ENCODE measurements at regions of chr11 and their contacts with region 1.

Region 1: GRCh38 chr11:20042118-20042518 is 118.2 kb downstream of the DBX1 start:
- DNase-seq: no peak
- ATAC-seq: no peak
- H3K4me3 ChIP-seq: no peak overlapping the region
- H3K27ac ChIP-seq: peak overlapping the region in 7 of 12 donors; percentile 6 to 61 (median 17)
- H3K4me1 ChIP-seq: peaks cover 0 to 50% (median 15%) of the 10 kb centered on the region in 12 donors
- H3K27me3 ChIP-seq: no peaks in the 10 kb centered on the region
- CTCF ChIP-seq: no peak
- POLR2A ChIP-seq: no peak

Region 2: DNA sequence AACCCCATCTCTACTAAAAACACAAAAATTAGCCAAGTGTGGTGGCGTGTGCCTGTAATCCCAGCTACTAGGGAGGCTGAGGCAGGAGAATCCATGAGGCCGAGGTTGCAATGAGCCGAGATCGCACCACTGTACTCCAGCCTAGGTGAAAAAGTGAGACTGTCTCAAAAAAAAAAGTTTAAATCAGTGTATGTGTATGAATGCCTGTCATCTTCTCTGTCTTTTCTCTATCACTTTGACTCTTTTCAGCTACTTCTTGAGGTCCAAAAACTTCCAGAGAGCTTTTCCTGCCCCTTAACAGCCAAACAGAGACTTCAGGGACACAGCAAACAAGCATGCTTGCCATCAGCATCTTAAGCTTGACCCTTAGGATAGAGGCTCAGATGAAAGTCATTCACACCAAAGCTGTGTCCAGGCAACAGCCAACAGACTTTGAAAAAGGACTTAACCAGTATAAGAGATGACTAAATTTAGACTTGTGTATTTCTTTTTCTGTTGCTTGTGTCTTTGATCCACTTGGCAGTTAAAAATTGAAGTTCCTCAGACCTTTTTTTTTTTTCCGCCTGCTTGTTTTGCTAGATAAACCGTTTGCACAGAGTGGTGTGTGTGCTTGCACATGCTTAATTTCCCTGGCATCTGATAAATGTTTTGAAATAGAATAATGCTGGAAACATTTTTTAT is 33.8 kb before region 1 on chr11:
- intact Hi-C with region 1: loop called in 3 of 10 experiments (anchors 5 kb)
- DNase-seq: no peak
- ATAC-seq: peak in 1 of 4 donors; percentile 18
- H3K4me3 ChIP-seq: no peak overlapping the region
- H3K27ac ChIP-seq: peak overlapping the region in 9 of 12 donors; percentile 0 to 81 (median 73)
- H3K4me1 ChIP-seq: peaks cover 0 to 36% (median 17%) of the 10 kb centered on the region in 12 donors
- H3K27me3 ChIP-seq: no peaks in the 10 kb centered on the region
- CTCF ChIP-seq: no peak
- POLR2A ChIP-seq: no peak

Region 3: DNA sequence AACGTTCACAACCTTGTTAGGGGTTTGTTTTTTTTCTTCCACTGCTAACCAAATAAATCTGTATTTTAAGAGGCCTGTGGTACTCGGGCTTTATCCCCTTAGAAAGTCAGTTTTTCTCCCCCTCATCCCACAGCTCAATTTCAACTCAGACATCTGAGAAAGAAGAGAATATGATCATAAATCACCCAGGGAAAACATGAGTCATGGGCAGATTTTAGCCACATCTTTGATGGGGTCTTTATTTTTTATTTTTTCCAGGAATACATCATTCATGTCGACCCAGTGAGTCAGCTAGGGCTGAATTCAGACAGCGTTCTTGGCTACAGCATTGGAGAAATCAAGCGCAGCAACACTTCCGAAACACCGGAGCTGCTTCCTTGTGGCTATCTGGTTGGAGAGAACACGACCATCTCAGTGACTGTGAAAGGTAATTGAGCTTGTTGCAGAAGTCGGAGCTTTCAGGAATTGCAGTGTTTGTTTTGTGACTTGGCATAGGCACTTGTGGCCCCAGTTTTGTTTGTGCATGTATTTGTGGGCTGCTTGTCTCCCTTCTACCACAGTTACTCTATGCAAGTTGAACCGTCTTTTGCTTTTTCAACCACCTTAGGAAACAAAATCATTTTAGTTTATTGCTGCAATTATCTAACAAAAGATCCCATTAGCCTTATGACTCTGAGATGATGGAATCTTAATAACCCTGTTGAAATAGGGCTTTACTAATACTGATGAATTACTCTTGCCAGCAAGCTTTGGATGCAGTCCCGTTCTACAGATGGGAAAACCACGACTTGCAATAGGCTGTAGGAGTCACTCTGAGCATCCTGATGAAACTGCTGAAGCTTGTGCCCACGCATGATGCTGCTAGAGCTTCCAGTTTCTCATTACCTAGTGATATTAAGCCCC is 55.5 kb after region 1 on chr11:
- intact Hi-C with region 1: no loop called
- DNase-seq: no peak
- ATAC-seq: no peak
- H3K4me3 ChIP-seq: no peak overlapping the region
- H3K27ac ChIP-seq: peak overlapping the region in 2 of 12 donors; percentile 22 to 42
- H3K4me1 ChIP-seq: peaks cover 0 to 11% (median 0%) of the 10 kb centered on the region in 12 donors
- H3K27me3 ChIP-seq: no peaks in the 10 kb centered on the region
- CTCF ChIP-seq: no peak
- POLR2A ChIP-seq: no peak